CD4-positive, alpha-beta memory T cell (primary cell): ENCODE measurements at regions of chr19 and their contacts with region 1.

Region 1: GRCh38 chr19:35066691-35067563 is 25.4 kb downstream of the HPN start:
- DNase-seq: peak; percentile 83 to 85 (median 85)
- H3K4me3 ChIP-seq: no peak overlapping the region
- H3K4me3 Mint-ChIP-seq: no peak overlapping the region
- H3K27ac ChIP-seq: no peak overlapping the region
- H3K27ac Mint-ChIP-seq: peak overlapping the region in 6 of 7 donors; percentile 43 to 83 (median 71)
- H3K4me1 ChIP-seq: peaks cover 6% of the 10 kb centered on the region
- H3K4me1 Mint-ChIP-seq: peaks cover 4 to 10% (median 6%) of the 10 kb centered on the region in 4 donors
- H3K27me3 ChIP-seq: no peaks in the 10 kb centered on the region
- H3K27me3 Mint-ChIP-seq: peaks cover 1 to 2% of the 10 kb centered on the region in 2 donors

Region 2: DNA sequence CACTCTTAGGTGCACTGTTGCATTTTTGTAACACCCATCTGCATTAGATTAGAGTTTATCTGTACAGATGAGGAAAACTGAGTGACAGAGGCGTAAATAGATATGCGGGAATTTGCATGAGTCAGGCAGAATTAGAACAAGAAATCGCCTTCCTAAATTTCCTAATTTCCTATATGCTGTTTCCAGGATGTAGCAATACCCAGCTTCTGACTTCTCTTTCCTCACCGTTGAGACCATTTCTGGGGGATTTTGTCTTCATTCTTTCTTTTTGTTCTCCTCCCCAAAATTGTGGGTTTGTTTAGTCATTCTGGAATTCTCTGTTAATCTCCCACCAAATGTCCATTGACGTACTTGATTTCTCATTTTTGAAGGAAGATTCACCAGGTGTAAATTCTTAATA is 92.3 kb before region 1 on chr19:
- CTCF ChIA-PET with region 1: interaction called, 10 read pairs
- POLR2A ChIA-PET with region 1: no interaction called
- intact Hi-C with region 1: no loop called
- DNase-seq: no peak
- H3K4me3 ChIP-seq: no peak overlapping the region
- H3K4me3 Mint-ChIP-seq: peak overlapping the region in 1 of 8 donors; percentile 26
- H3K27ac ChIP-seq: no peak overlapping the region
- H3K27ac Mint-ChIP-seq: peak overlapping the region in 1 of 7 donors; percentile 50
- H3K4me1 ChIP-seq: peaks cover 11% of the 10 kb centered on the region
- H3K4me1 Mint-ChIP-seq: peaks cover 9 to 19% (median 13%) of the 10 kb centered on the region in 4 donors
- H3K27me3 ChIP-seq: no peaks in the 10 kb centered on the region
- H3K27me3 Mint-ChIP-seq: peaks cover 0 to 4% of the 10 kb centered on the region in 2 donors

Region 3: GRCh38 chr19:35055715-35056179 is 11.2 kb before region 1 on chr19:
- CTCF ChIA-PET with region 1: interaction called, 32 read pairs
- POLR2A ChIA-PET with region 1: no interaction called
- intact Hi-C with region 1: no loop called
- DNase-seq: no peak
- H3K4me3 ChIP-seq: no peak overlapping the region
- H3K4me3 Mint-ChIP-seq: no peak overlapping the region
- H3K27ac ChIP-seq: no peak overlapping the region
- H3K27ac Mint-ChIP-seq: no peak overlapping the region
- H3K4me1 ChIP-seq: no peaks in the 10 kb centered on the region
- H3K4me1 Mint-ChIP-seq: no peaks in the 10 kb centered on the region
- H3K27me3 ChIP-seq: no peaks in the 10 kb centered on the region
- H3K27me3 Mint-ChIP-seq: peaks cover 2 to 3% of the 10 kb centered on the region in 2 donors

Region 4: GRCh38 chr19:35135389-35135909 is 68.5 kb after region 1 on chr19:
- CTCF ChIA-PET with region 1: interaction called, 18 read pairs
- POLR2A ChIA-PET with region 1: no interaction called
- intact Hi-C with region 1: no loop called
- DNase-seq: peak; percentile 48 to 66 (median 52)
- H3K4me3 ChIP-seq: no peak overlapping the region
- H3K4me3 Mint-ChIP-seq: no peak overlapping the region
- H3K27ac ChIP-seq: no peak overlapping the region
- H3K27ac Mint-ChIP-seq: peak overlapping the region in 2 of 7 donors; percentile 6 to 71
- H3K4me1 ChIP-seq: peaks cover 1% of the 10 kb centered on the region
- H3K4me1 Mint-ChIP-seq: peaks cover 2 to 21% (median 8%) of the 10 kb centered on the region in 4 donors
- H3K27me3 ChIP-seq: no peaks in the 10 kb centered on the region
- H3K27me3 Mint-ChIP-seq: no peaks in the 10 kb centered on the region

Region 5: GRCh38 chr19:35495107-35496064 is 428.5 kb after region 1 on chr19:
- CTCF ChIA-PET with region 1: interaction called, 11 read pairs
- POLR2A ChIA-PET with region 1: no interaction called
- intact Hi-C with region 1: loop called (anchors 1 kb)
- DNase-seq: peak; percentile 59 to 70 (median 63)
- H3K4me3 ChIP-seq: no peak overlapping the region
- H3K4me3 Mint-ChIP-seq: peak overlapping the region in 3 of 8 donors; percentile 38 to 51 (median 39)
- H3K27ac ChIP-seq: no peak overlapping the region
- H3K27ac Mint-ChIP-seq: peak overlapping the region in 3 of 7 donors; percentile 30 to 48 (median 36)
- H3K4me1 ChIP-seq: peaks cover 7% of the 10 kb centered on the region
- H3K4me1 Mint-ChIP-seq: peaks cover 0 to 9% (median 6%) of the 10 kb centered on the region in 4 donors
- H3K27me3 ChIP-seq: no peaks in the 10 kb centered on the region
- H3K27me3 Mint-ChIP-seq: peaks cover 9 to 15% of the 10 kb centered on the region in 2 donors